ENCODE measurements at regions of chr6 and their contacts with region 1.

Region 1: DNA sequence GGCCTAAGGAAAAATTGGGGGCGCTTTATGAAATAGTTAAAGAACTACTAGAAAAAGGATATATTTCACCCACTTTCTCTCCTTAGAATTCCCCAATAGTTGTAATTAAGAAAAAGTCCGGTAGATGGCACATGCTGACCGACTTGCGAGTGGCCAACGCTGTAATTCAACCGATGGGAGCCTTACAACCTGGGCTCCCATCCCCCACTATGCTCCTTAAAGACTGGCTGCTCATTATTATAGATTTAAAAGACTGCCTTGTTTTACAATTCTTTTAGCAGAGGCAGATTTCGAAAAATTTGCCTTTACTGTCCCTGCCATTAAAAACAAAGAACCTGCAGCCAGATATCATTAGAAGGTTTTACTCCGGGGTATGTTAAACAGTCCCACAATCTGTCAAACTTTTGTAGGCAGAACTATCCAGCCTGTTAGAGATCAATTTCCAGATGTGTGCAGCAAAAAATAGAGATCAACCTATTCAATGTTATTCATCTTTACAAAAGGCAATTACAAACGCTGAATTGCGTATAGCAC is 58.5 kb upstream of the PRSS16 start:
- DNase-seq: peak; percentile 83
- H3K4me3 ChIP-seq: peak overlapping the region; percentile 59 to 80 (median 66)
- H3K27ac ChIP-seq: peak overlapping the region; percentile 37
- H3K4me1 ChIP-seq: no peaks in the 10 kb centered on the region
- H3K27me3 ChIP-seq: peaks cover 0 to 4% of the 10 kb centered on the region in 2 experiments
- CTCF ChIP-seq: peak; percentile 54 to 55
- POLR2A ChIP-seq: no peak

Region 2: GRCh38 chr6:27025351-27025750 is 163.6 kb before region 1 on chr6:
- CTCF ChIA-PET with region 1: no interaction called
- POLR2A ChIA-PET with region 1: no interaction called
- dilution Hi-C with region 1: no loop called
- intact Hi-C with region 1: no loop called
- DNase-seq: no peak
- H3K4me3 ChIP-seq: no peak overlapping the region
- H3K27ac ChIP-seq: no peak overlapping the region
- H3K4me1 ChIP-seq: no peaks in the 10 kb centered on the region
- H3K27me3 ChIP-seq: peaks cover 4 to 6% of the 10 kb centered on the region in 2 experiments
- CTCF ChIP-seq: no peak
- POLR2A ChIP-seq: no peak

Region 3: GRCh38 chr6:27157459-27158315 is 31.3 kb before region 1 on chr6:
- CTCF ChIA-PET with region 1: interaction called, 7 read pairs
- POLR2A ChIA-PET with region 1: no interaction called
- dilution Hi-C with region 1: no loop called
- intact Hi-C with region 1: loop called (anchors 1 kb)
- DNase-seq: peak; percentile 57
- H3K4me3 ChIP-seq: peak overlapping the region; percentile 30 to 64 (median 59)
- H3K27ac ChIP-seq: no peak overlapping the region
- H3K4me1 ChIP-seq: peaks cover 10% of the 10 kb centered on the region
- H3K27me3 ChIP-seq: peaks cover 8 to 11% of the 10 kb centered on the region in 2 experiments
- CTCF ChIP-seq: peak; percentile 42 to 63
- POLR2A ChIP-seq: no peak

Region 4: GRCh38 chr6:27706431-27706830 is 517.5 kb after region 1 on chr6:
- CTCF ChIA-PET with region 1: no interaction called
- POLR2A ChIA-PET with region 1: no interaction called
- dilution Hi-C with region 1: no loop called
- intact Hi-C with region 1: no loop called
- DNase-seq: no peak
- H3K4me3 ChIP-seq: no peak overlapping the region
- H3K27ac ChIP-seq: no peak overlapping the region
- H3K4me1 ChIP-seq: no peaks in the 10 kb centered on the region
- H3K27me3 ChIP-seq: no peaks in the 10 kb centered on the region
- CTCF ChIP-seq: no peak
- POLR2A ChIP-seq: no peak